MCF 10A (cell line): ENCODE measurements at regions of chr22 and their contacts with region 1.

Region 1: GRCh38 chr22:31313366-31314147 is 21.3 kb upstream of the PIK3IP1 start:
- DNase-seq: peak; percentile 95
- H3K4me3 Mint-ChIP-seq: no peak overlapping the region
- H3K27ac Mint-ChIP-seq: peak overlapping the region; percentile 52
- H3K4me1 Mint-ChIP-seq: peaks cover 6% of the 10 kb centered on the region
- H3K27me3 Mint-ChIP-seq: no peaks in the 10 kb centered on the region
- CTCF ChIP-seq: peak; percentile 71

Region 2: GRCh38 chr22:31036671-31037550 is 276.6 kb before region 1 on chr22:
- CTCF ChIA-PET with region 1: no interaction called
- POLR2A ChIA-PET with region 1: no interaction called
- intact Hi-C with region 1: no loop called
- DNase-seq: peak; percentile 78
- H3K4me3 Mint-ChIP-seq: peak overlapping the region; percentile 46
- H3K27ac Mint-ChIP-seq: peak overlapping the region; percentile 11
- H3K4me1 Mint-ChIP-seq: peaks cover 14% of the 10 kb centered on the region
- H3K27me3 Mint-ChIP-seq: no peaks in the 10 kb centered on the region
- CTCF ChIP-seq: no peak

Region 3: DNA sequence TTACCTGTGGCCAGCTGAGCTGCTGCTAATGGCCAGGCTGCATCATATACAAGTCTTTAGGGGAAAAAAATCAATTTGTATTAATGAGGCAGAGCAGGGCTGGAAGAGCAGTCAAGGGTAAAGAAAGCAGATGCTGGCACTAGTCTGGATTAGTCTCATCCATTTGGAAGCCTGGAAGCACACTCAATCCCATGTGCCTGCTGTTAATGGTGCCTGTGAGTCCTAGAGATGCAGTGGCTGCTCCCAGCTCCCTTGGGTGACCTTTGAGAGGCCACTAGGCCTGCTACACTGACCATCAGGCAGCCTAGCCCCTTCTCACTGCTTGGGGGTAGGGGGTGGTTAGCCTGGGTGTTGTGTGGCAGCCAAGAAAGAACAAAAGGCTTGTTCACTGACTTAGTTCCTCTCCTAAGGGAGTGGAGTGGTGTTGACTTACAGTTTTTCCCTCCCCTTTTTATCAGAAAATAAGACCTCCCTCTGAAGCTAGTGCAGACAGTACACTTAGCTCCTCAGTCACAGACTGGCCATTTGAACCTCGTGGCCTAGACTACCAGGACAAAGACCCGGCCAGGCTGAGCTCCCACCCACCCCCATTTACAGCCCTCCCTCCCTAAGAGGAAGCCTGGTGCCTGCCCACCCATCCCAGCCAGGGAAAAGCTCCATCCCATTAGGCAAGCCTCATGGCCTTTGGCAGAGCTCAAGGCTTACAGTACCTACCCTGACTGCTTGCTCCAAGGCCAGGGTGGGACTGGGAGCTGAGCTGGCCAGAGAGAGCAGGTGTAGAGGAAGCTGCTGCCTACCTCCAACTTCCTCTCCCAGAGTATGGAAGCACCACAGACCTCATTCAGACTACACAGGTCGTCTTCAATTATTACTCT is 29.0 kb before region 1 on chr22:
- CTCF ChIA-PET with region 1: interaction called, 10 read pairs
- POLR2A ChIA-PET with region 1: interaction called, 207 read pairs
- intact Hi-C with region 1: no loop called
- DNase-seq: no peak
- H3K4me3 Mint-ChIP-seq: no peak overlapping the region
- H3K27ac Mint-ChIP-seq: peak overlapping the region; percentile 49
- H3K4me1 Mint-ChIP-seq: peaks cover 9% of the 10 kb centered on the region
- H3K27me3 Mint-ChIP-seq: no peaks in the 10 kb centered on the region
- CTCF ChIP-seq: no peak

Region 4: GRCh38 chr22:31302006-31302405 is 11.6 kb before region 1 on chr22:
- CTCF ChIA-PET with region 1: interaction called, 65 read pairs
- POLR2A ChIA-PET with region 1: interaction called, 207 read pairs
- intact Hi-C with region 1: no loop called
- DNase-seq: no peak
- H3K4me3 Mint-ChIP-seq: no peak overlapping the region
- H3K27ac Mint-ChIP-seq: no peak overlapping the region
- H3K4me1 Mint-ChIP-seq: no peaks in the 10 kb centered on the region
- H3K27me3 Mint-ChIP-seq: no peaks in the 10 kb centered on the region
- CTCF ChIP-seq: no peak

Region 5: DNA sequence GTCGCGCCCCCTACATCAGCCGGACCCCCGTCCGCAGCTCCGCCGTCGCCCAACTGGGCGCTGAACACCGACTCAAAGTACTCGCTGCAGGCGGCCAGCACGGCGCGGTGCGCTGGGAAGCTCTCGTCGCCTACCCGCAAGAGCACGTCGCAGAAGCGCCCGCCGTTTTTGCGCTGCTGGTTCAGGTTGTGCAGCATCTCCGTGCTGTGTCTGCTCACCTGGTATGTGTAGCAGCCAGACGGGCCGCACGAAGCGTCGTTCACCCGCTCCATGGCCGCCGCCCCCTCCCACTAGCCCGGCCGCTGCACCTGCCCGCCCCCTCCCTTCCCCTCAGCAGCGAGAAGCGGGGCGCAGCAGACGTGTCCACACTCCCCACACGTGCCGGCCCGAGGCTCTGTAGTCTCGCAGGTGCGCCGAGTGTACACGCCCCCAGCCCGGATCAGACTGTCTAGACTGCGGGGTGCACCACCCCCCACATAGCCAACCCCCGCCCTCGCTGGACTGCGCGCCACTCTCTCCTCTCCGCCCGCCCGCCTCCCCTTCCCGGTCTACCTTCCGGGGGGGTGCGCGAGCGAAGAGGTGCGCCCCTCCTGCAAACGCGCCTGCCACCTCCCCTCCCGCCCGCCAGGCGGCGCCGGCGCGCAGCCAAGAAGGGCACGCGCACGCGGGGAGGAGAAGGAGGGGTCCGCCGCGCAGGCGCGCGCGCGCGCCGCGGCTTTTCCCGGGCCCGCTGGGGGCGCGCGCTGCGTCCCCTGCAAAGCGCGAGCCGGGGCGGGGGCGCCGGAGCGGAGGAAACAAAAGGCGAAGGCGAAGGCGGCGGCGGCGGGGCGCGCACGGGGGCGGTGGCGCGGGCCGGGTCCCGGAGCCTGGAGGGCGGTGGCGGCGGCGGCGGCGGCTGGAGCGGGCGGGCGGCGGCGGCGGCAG is 32.0 kb after region 1 on chr22:
- CTCF ChIA-PET with region 1: interaction called, 4 read pairs
- POLR2A ChIA-PET with region 1: interaction called, 24 read pairs
- intact Hi-C with region 1: no loop called
- DNase-seq: peak; percentile 83
- H3K4me3 Mint-ChIP-seq: peak overlapping the region; percentile 76
- H3K27ac Mint-ChIP-seq: no peak overlapping the region
- H3K4me1 Mint-ChIP-seq: peaks cover 18% of the 10 kb centered on the region
- H3K27me3 Mint-ChIP-seq: no peaks in the 10 kb centered on the region
- CTCF ChIP-seq: peak; percentile 78

Region 6: DNA sequence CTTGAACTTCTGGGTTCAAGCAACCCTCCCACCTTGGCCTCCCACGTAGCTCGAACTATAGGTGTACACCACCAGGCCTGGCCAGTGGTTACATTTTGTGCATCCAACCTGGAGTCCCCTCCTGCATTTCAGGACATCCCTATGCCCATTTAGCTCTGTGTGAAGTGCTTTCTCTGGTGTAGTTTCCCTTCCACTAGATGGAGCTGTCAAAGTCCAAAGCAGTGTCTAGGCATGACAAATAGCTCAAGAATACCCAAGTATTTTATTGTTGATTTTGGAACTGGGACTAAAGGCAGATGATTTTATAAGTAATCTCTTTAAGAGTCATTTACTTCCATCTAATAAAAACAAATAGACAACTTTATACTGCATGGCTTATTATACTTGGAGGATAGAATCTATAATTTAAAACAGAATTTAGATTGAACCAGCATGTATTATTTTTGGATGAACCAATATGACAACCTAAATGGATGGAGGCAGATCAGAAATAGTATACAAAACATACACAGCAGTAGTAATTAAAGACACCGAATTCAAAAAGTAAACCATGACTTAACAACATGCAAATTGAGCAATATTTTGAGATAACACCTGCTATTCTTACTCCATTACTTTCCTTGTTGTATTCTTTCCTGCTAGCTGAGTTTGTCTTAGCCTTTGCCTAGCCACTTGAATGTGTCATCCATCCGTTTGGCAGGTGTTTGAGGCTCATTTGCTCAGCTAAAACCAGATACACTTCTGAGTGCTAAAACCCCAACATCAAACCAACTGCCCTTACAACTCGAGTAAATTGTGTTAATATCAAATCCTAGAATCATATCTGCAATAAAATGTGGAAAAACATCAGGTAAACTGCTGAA is 138.4 kb after region 1 on chr22:
- CTCF ChIA-PET with region 1: no interaction called
- POLR2A ChIA-PET with region 1: no interaction called
- intact Hi-C with region 1: no loop called
- DNase-seq: peak; percentile 60
- H3K4me3 Mint-ChIP-seq: no peak overlapping the region
- H3K27ac Mint-ChIP-seq: no peak overlapping the region
- H3K4me1 Mint-ChIP-seq: peaks cover 7% of the 10 kb centered on the region
- H3K27me3 Mint-ChIP-seq: no peaks in the 10 kb centered on the region
- CTCF ChIP-seq: peak; percentile 38

Region 7: GRCh38 chr22:31474743-31475142 is 161.2 kb after region 1 on chr22:
- CTCF ChIA-PET with region 1: no interaction called
- POLR2A ChIA-PET with region 1: no interaction called
- intact Hi-C with region 1: no loop called
- DNase-seq: no peak
- H3K4me3 Mint-ChIP-seq: no peak overlapping the region
- H3K27ac Mint-ChIP-seq: no peak overlapping the region
- H3K4me1 Mint-ChIP-seq: no peaks in the 10 kb centered on the region
- H3K27me3 Mint-ChIP-seq: no peaks in the 10 kb centered on the region
- CTCF ChIP-seq: no peak